ENCODE measurements at regions of chr12 and their contacts with region 1.

Region 1: DNA sequence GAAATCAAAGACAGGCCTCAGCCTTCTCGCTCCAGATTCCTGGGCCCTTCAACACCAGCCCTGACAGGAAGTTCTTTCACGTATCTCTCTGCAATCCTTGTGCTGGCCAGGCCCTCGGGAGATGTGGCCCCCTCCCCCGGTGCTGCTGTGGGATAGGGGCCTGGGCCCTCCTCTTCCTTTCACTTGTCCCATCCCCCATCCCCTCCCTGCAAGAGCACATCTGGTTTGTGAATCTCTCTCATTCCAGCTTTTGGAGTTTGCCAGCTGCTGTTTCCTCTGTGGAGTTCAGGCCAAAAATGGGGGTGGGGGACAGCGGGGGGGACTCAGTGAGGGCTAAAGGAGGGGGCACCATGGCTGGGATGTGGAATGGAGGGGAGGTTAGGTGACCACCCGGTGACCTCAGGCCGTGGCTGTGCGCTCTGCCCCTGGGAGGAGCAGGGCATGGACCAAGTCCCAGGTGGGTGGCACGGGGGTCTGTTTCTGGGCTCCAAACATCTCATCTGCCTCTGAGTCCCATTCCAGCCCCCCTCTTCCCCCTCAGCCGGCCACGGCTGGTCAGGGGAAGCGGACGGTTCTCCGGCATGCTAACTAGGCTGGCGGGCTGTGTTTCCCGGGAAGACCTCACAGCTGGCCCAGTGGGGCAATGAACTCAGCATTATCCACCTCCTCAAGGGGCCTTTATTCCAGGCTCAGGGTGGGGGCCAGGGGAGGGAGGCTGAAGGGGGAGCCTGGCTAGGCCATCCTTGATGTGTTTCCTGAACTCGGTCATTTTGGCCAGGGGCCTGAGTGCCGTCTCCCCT is 7.4 kb downstream of the LRP1 start:
- DNase-seq: no peak
- H3K4me3 ChIP-seq: no peak overlapping the region
- H3K4me3 Mint-ChIP-seq: no peak overlapping the region
- H3K27ac Mint-ChIP-seq: no peak overlapping the region
- H3K4me1 ChIP-seq: peaks cover 52% of the 10 kb centered on the region
- H3K4me1 Mint-ChIP-seq: peaks cover 60% of the 10 kb centered on the region
- H3K27me3 ChIP-seq: no peaks in the 10 kb centered on the region
- H3K27me3 Mint-ChIP-seq: no peaks in the 10 kb centered on the region
- CTCF ChIP-seq: no peak

Region 2: GRCh38 chr12:56840922-56841321 is 294.8 kb before region 1 on chr12:
- CTCF ChIA-PET with region 1: no interaction called
- POLR2A ChIA-PET with region 1: no interaction called
- intact Hi-C with region 1: no loop called
- DNase-seq: no peak
- H3K4me3 ChIP-seq: no peak overlapping the region
- H3K4me3 Mint-ChIP-seq: no peak overlapping the region
- H3K27ac Mint-ChIP-seq: no peak overlapping the region
- H3K4me1 ChIP-seq: no peaks in the 10 kb centered on the region
- H3K4me1 Mint-ChIP-seq: no peaks in the 10 kb centered on the region
- H3K27me3 ChIP-seq: no peaks in the 10 kb centered on the region
- H3K27me3 Mint-ChIP-seq: peaks cover 10% of the 10 kb centered on the region
- CTCF ChIP-seq: no peak

Region 3: DNA sequence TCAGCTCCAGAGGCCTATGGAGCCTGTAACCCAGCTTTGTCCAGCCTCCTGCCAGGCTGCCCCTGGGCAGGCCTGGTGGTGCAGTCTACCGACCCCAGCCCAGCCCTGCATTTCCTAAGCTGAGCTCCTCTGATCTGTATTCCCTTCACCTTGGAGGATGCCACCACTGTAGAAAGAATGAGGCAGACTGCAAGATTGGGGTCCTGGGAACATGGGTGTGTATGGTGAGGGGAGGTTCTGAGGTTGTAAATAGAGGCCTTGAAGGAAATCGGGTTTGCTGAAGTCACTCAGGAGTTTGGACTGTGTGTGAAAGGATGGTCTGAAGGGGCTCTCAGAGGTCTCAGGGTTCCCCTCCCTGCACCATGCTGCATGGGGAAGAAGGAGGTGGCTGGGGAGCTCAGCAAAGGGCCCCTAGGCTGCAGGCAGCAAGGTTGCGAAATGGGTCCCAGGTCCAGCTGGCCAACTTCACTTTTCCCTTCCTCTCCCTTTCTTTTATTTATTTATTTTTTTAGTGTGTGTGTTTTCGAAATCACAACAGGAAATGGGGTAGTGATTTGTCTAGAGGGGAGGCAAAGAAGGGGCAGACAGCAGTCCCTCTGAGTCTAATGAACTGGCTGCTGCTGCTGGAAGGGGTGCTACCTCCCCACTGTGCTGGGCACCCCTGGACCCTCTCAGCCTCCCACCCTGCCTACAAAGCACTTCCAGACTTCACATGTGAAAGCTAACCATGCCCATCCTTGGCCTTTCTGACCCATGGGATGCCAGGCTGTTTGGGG is 12.9 kb after region 1 on chr12:
- CTCF ChIA-PET with region 1: interaction called, 3 read pairs
- POLR2A ChIA-PET with region 1: interaction called, 13 read pairs
- intact Hi-C with region 1: no loop called
- DNase-seq: peak; percentile 56 to 60
- H3K4me3 ChIP-seq: no peak overlapping the region
- H3K4me3 Mint-ChIP-seq: peak overlapping the region; percentile 17
- H3K27ac Mint-ChIP-seq: peak overlapping the region; percentile 97
- H3K4me1 ChIP-seq: peaks cover 44% of the 10 kb centered on the region
- H3K4me1 Mint-ChIP-seq: peaks cover 51% of the 10 kb centered on the region
- H3K27me3 ChIP-seq: no peaks in the 10 kb centered on the region
- H3K27me3 Mint-ChIP-seq: no peaks in the 10 kb centered on the region
- CTCF ChIP-seq: no peak

Measured in Caco-2 (cell line).